ENCODE measurements at regions of chr10 and their contacts with region 1.

Region 1: GRCh38 chr10:102225646-102226541 is at the start of gene ELOVL3:
- DNase-seq: peak; percentile 96
- ATAC-seq: peak; percentile 84
- H3K4me3 ChIP-seq: peak within 1 kb of the TSS; percentile 19 to 51
- H3K27ac ChIP-seq: no peak within 1 kb of the TSS; the same call in 1 of the 2 replicates
- H3K4me1 ChIP-seq: peaks cover 17 to 28% of the 10 kb centered on the region in 2 experiments
- H3K27me3 ChIP-seq: no peaks in the 10 kb centered on the region
- CTCF ChIP-seq: no peak
- POLR2A ChIP-seq: peak; percentile 80
- RAD21 ChIP-seq: no peak
- total RNA-seq, gene ELOVL3: 5.5 TPM

Region 2: GRCh38 chr10:101287997-101288635 is 937.8 kb before region 1 on chr10:
- CTCF ChIA-PET with region 1: no interaction called
- POLR2A ChIA-PET with region 1: no interaction called
- RAD21 ChIA-PET with region 1: no interaction called
- intact Hi-C with region 1: no loop called
- DNase-seq: peak; percentile 41
- ATAC-seq: peak; percentile 86
- H3K4me3 ChIP-seq: no peak overlapping the region
- H3K27ac ChIP-seq: no peak overlapping the region
- H3K4me1 ChIP-seq: no peaks in the 10 kb centered on the region; a peak in 1 of 4 replicates
- H3K27me3 ChIP-seq: no peaks in the 10 kb centered on the region
- CTCF ChIP-seq: peak; percentile 34 to 57 (median 45); a peak in 5 of 6 replicates
- POLR2A ChIP-seq: no peak
- RAD21 ChIP-seq: peak; percentile 72

Region 3: DNA sequence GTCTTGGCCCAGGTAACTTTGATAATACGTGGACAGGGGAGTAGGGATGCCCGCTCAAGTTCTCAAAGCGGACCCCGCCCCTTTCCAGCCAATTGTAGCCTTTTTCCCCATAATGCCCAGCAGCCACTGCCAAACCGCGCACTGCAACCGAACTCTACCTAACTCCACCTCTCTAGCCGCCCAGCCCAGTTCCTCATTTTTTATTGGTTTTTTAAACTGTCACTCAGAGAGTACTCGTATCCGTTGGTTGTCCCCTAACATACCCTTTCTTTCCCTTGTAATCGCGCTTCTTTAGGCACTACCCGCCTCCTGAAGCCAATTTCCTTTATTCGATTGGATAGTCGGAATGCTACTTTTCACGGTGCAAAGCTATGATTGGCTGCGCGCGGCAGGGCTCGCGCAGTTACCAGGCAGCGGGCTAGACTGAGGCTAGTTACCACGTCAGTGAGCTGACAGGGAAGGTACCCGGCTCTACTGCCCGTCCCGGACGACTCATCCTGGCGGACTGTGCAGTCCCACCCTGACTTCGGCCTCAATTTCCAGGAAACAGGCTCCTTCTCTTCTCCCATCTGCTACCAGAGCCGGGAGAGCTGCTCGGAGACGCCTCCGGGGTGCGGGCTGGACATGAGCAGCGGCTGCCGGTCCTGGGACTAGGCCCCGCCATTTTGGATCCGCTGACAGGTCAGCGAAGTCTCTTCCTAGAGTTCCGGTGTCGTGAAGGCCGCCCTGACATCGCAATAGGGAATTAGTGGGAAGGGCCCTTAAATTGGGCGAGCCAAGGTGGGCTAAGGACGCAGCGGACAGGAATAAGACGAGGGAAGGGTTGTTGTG is 19.4 kb after region 1 on chr10 and contains the start of gene GBF1:
- CTCF ChIA-PET with region 1: interaction called, 63 read pairs
- POLR2A ChIA-PET with region 1: interaction called, 10 read pairs
- RAD21 ChIA-PET with region 1: interaction called, 3 to 5 read pairs
- intact Hi-C with region 1: no loop called
- DNase-seq: peak; percentile 100
- ATAC-seq: peak; percentile 88
- H3K4me3 ChIP-seq: peak within 1 kb of the TSS; percentile 91 to 95
- H3K27ac ChIP-seq: peak within 1 kb of the TSS; percentile 61
- H3K4me1 ChIP-seq: peaks cover 24 to 54% of the 10 kb centered on the region in 2 experiments
- H3K27me3 ChIP-seq: no peaks in the 10 kb centered on the region
- CTCF ChIP-seq: no peak
- POLR2A ChIP-seq: peak; percentile 87
- RAD21 ChIP-seq: no peak
- total RNA-seq, gene GBF1: 58.9 TPM

Region 4: DNA sequence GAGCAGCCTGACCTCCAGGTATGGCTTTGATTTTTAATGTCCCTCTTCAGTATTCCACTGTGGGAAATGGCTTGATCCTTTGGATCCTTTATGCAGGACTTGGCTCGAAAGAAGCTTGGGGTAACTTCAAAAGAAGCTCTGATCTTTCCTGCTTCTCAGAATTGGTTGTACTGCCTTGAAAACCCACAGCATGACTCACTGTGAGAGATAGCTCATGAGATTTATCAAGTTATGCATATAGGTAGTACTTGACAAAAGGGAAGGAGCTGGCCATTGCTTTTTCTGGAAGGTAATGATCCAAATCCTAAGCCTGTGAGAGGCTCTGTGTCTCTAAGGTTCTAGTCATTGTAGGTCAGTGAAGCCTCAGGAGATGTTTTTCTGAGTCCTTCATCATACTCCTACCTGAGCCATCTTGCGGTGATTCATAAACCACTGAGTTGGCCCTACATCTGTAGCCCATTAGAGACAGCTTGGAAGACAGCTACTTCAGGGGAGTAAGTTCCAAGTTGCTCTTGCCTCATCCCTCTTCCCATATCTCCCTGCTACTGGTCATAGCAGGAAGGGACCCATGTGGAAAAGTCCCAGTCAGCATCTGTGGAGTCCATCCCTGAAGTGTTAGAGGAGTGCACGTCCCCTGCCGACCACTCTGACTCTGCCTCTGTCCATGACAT is 133.0 kb after region 1 on chr10:
- CTCF ChIA-PET with region 1: interaction called, 625 read pairs
- POLR2A ChIA-PET with region 1: no interaction called
- RAD21 ChIA-PET with region 1: interaction called in 1 of 2 experiments, 57 read pairs
- intact Hi-C with region 1: no loop called
- DNase-seq: no peak
- ATAC-seq: no peak
- H3K4me3 ChIP-seq: no peak overlapping the region
- H3K27ac ChIP-seq: no peak overlapping the region
- H3K4me1 ChIP-seq: no peaks in the 10 kb centered on the region
- H3K27me3 ChIP-seq: no peaks in the 10 kb centered on the region
- CTCF ChIP-seq: no peak
- POLR2A ChIP-seq: no peak
- RAD21 ChIP-seq: no peak

Region 5: GRCh38 chr10:102394079-102394800 is 168.3 kb after region 1 on chr10:
- CTCF ChIA-PET with region 1: interaction called, 154 read pairs
- POLR2A ChIA-PET with region 1: interaction called, 15 read pairs
- RAD21 ChIA-PET with region 1: interaction called in 1 of 2 experiments, 8 read pairs
- intact Hi-C with region 1: loop called (anchors 1 kb)
- DNase-seq: peak; percentile 95
- ATAC-seq: peak; percentile 88
- H3K4me3 ChIP-seq: peak overlapping the region; percentile 75 to 92
- H3K27ac ChIP-seq: peak overlapping the region; percentile 77
- H3K4me1 ChIP-seq: peaks cover 16 to 58% of the 10 kb centered on the region in 2 experiments
- H3K27me3 ChIP-seq: no peaks in the 10 kb centered on the region
- CTCF ChIP-seq: no peak; a peak in 1 of 6 replicates
- POLR2A ChIP-seq: no peak
- RAD21 ChIP-seq: no peak

Region 6: DNA sequence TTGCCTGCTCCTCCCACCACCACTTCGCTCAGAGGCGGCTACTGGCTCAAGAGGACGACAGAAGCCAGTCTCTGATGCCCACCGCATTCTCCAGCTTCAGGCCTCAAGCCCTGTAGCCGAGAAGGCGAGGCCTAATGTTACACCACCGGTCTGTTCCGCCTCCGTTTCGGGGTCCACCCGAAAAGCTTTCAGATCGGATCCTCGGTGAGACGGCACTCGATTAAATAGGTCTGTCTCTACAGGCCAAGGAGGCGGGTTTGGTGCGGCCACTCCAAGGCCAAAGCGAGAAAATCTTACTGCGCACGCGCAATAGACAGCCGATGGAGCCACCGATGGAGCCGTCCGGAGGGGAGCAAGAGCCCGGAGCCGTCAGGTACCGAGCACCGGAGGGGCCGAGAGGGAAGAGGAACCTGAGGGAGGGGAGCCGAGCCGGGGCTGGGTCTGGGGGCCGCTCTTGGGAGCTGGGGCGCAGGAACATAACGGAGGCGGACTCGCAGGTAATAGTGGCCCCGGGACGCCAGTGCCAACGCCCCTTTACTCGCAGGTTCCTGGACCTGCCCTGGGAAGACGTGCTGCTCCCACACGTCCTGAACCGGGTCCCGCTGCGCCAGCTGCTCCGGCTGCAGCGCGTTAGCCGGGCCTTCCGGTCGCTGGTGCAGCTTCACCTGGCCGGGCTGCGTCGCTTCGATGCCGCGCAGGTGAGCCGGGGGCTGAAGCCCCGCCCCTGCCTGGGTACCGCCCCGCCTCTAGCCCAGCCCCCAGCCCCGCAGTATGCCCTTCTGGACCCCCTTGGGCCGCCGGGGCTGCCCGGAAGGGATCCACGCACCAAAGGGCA is 195.1 kb after region 1 on chr10 and contains the start of gene FBXL15:
- CTCF ChIA-PET with region 1: interaction called, 98 read pairs
- POLR2A ChIA-PET with region 1: interaction called, 11 read pairs
- RAD21 ChIA-PET with region 1: interaction called in 1 of 2 experiments, 5 read pairs
- intact Hi-C with region 1: loop called (anchors 1 kb)
- DNase-seq: peak; percentile 99
- ATAC-seq: peak; percentile 71
- H3K4me3 ChIP-seq: peak within 1 kb of the TSS; percentile 87 to 94
- H3K27ac ChIP-seq: peak within 1 kb of the TSS; percentile 77
- H3K4me1 ChIP-seq: peaks cover 15 to 33% of the 10 kb centered on the region in 2 experiments; a peak in 3 of 4 replicates
- H3K27me3 ChIP-seq: no peaks in the 10 kb centered on the region
- CTCF ChIP-seq: no peak
- POLR2A ChIP-seq: peak; percentile 20
- RAD21 ChIP-seq: no peak
- total RNA-seq, gene FBXL15: 21.1 TPM

Region 7: GRCh38 chr10:102476466-102477141 is 250.7 kb after region 1 on chr10:
- CTCF ChIA-PET with region 1: interaction called, 43 read pairs
- POLR2A ChIA-PET with region 1: no interaction called
- RAD21 ChIA-PET with region 1: no interaction called
- intact Hi-C with region 1: loop called (anchors 1 kb)
- DNase-seq: no peak
- ATAC-seq: no peak
- H3K4me3 ChIP-seq: no peak overlapping the region
- H3K27ac ChIP-seq: no peak overlapping the region
- H3K4me1 ChIP-seq: no peaks in the 10 kb centered on the region
- H3K27me3 ChIP-seq: no peaks in the 10 kb centered on the region
- CTCF ChIP-seq: no peak
- POLR2A ChIP-seq: no peak
- RAD21 ChIP-seq: no peak

Measured in HCT116 (cell line).